ENCODE measurements at regions of chr2 and their contacts with region 1.

Region 1: GRCh38 chr2:133886735-133887660 is 318.7 kb upstream of the NCKAP5 start:
- DNase-seq: peak; percentile 70
- H3K4me3 ChIP-seq: no peak overlapping the region
- H3K27ac ChIP-seq: no peak overlapping the region
- H3K4me1 ChIP-seq: no peaks in the 10 kb centered on the region
- H3K27me3 ChIP-seq: no peaks in the 10 kb centered on the region
- CTCF ChIP-seq: peak; percentile 81

Region 2: DNA sequence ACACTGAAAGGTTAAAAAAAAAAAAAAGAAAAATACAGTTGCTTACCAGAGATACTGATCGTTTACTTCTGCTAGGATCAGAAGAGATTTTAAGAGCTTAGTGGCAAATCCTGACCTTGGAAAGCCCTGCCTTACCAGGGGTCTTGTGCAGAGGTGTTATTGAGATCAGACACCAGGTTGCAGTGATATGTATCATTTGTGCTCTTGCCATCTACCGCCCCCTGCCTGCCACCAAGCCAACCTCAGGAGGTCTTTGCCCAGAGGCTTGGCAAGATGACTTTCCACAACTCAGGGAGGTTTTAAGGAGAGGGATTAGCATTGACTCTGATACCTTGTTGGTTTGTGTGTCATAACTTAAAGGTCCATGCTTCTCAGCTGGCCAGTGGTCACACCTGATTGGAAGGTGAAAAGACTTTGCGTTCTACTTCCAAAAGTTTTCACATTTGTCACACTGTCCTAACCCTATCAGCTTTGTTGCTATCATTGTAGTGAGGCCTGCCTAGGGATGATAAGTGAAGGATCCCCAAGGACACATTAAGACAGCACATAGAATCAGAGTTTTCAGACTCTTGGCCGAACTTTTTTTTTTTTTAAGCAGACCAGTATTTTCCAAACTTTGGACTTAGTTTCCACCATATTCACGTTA is 320.7 kb after region 1 on chr2:
- CTCF ChIA-PET with region 1: no interaction called
- POLR2A ChIA-PET with region 1: no interaction called
- intact Hi-C with region 1: loop called (anchors 5 kb)
- DNase-seq: peak; percentile 58
- H3K4me3 ChIP-seq: no peak overlapping the region
- H3K27ac ChIP-seq: no peak overlapping the region
- H3K4me1 ChIP-seq: no peaks in the 10 kb centered on the region
- H3K27me3 ChIP-seq: no peaks in the 10 kb centered on the region
- CTCF ChIP-seq: peak; percentile 73

Region 3: DNA sequence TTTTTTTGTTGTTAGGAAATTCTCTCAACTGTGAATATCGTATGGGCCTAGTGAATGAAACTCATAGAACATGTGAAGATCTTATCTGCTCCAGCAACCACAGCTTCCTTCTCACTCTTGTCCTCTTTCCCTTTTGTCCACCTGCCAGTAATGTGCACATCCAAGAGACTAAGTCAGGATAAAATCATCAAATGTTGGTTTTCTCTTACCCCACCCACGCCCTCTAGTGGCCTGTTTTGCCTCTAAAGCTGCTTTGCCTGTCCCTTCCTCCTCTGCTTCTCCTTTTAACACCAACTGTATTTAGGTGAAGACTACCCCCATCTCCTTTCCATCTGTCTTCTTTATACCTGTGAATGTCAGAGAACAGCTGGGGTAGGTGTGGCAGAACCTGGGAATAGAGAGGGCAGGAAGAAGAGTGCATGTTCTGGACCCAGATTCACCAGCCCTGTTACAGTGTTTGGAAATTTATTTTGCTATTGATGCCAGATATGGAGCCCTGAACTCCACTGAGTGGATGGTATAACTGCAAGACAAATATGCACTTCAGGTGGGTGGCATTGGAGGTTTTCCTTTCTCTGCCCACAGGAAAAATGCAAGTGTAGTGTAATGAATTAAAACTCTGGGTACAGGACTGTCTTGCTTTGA is 358.5 kb after region 1 on chr2:
- CTCF ChIA-PET with region 1: no interaction called
- POLR2A ChIA-PET with region 1: no interaction called
- intact Hi-C with region 1: loop called (anchors 2 kb)
- DNase-seq: peak; percentile 66
- H3K4me3 ChIP-seq: no peak overlapping the region
- H3K27ac ChIP-seq: no peak overlapping the region
- H3K4me1 ChIP-seq: no peaks in the 10 kb centered on the region
- H3K27me3 ChIP-seq: peaks cover 6% of the 10 kb centered on the region
- CTCF ChIP-seq: peak; percentile 93

Region 4: DNA sequence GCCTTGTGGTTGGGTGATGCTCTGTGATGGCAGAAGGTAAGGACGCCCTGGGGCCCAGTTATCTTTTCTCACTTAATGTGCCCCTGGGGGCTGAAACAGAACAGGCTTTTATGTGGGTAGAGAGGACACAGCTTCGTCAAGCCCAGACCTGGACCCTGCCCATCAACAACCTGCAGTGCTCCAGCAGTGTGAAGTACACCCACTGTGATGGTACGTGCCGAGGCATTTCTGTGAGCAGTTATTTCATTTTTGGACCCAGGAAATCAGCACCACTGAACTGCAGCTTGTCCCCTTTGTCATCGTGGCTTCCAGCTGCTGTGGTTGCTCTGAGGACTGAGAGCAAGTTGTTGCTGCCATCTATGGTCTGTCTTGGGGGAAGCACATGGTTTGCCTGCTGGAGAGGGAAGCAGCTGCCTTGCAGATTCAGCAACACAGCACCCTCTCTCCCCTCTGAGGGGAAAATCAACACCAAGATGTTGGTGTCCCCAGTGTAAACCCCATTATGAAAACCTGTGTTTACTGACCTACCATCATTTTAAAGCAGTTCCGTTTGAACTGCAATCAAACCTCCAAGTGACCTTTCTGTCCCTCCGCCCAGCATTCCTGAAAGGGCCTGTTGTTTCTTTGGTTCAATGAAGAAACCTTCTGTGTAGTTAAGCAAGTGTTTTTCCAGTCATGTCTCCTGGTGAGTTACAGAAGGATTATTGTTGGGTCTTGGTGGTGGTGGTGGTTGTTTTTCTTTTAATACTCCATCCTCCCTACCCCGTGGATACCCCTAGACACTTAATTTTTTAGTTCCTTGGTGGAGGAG is 525.0 kb after region 1 on chr2:
- CTCF ChIA-PET with region 1: interaction called, 9 read pairs
- POLR2A ChIA-PET with region 1: no interaction called
- intact Hi-C with region 1: loop called (anchors 2 kb)
- DNase-seq: peak; percentile 82
- H3K4me3 ChIP-seq: no peak overlapping the region
- H3K27ac ChIP-seq: no peak overlapping the region
- H3K4me1 ChIP-seq: no peaks in the 10 kb centered on the region
- H3K27me3 ChIP-seq: no peaks in the 10 kb centered on the region
- CTCF ChIP-seq: peak; percentile 67